ENCODE measurements at regions of chr7 and their contacts with region 1.

Region 1: DNA sequence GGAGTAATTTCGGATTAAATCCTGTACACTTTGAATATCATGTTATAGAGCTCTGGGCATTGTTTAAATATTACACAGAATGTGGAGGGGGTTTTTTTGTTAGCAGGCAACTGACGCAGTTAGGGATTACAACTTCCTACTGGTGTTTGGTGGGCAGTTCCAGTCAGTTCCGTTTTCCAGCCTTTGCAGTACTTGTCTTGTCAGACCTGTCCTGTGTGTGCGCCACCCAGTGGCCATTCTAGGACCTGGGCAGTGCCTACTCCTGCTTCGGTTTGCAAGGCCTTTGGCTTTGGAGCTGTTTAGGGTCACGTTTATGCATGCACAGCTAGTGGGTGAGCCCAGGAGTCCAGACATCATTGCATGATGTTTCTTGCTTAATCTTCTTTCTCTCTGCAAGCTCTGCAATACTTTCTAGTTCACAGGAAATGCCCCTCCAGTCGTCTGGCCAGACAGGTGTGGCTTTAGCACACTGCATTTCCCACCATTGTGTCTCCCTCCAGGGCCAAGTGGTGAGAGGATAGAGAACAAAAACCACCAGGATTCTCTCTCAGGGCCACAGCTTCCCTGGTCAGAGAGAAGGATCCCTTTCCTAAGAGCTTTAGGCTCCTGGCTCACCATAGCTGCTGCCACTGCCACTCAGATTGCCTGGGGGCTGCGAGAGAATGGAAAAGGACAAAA is 96.5 kb upstream of the TARP start:
- DNase-seq: peak; percentile 77
- H3K4me3 Mint-ChIP-seq: no peak overlapping the region
- H3K27ac Mint-ChIP-seq: peak overlapping the region; percentile 3
- H3K4me1 Mint-ChIP-seq: peaks cover 45% of the 10 kb centered on the region
- H3K27me3 Mint-ChIP-seq: no peaks in the 10 kb centered on the region

Region 2: GRCh38 chr7:37901236-37901827 is 468.6 kb before region 1 on chr7:
- CTCF ChIA-PET with region 1: interaction called, 13 read pairs
- DNase-seq: no peak
- H3K4me3 Mint-ChIP-seq: no peak overlapping the region
- H3K27ac Mint-ChIP-seq: no peak overlapping the region
- H3K4me1 Mint-ChIP-seq: no peaks in the 10 kb centered on the region
- H3K27me3 Mint-ChIP-seq: no peaks in the 10 kb centered on the region

Region 3: DNA sequence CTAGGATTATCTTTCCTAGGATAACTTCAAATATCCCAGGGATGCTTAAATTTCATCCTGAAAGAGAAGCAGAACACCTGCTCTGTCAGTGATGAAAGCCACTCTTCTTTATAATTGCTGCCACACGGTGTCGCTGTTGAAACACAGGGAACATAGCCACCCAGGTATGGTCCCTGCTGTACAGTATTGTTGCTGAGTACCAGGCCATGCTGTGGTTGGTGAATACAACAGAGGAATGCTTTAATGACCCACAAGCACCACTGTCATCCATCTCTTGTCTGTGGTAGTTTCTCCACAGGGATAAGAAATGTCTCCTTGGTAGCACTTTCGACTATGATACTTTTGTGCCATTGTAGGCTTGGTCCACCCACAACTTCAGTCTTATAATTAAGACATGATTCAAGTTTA is 262.5 kb before region 1 on chr7:
- CTCF ChIA-PET with region 1: interaction called, 48 read pairs
- DNase-seq: peak; percentile 76
- H3K4me3 Mint-ChIP-seq: no peak overlapping the region
- H3K27ac Mint-ChIP-seq: no peak overlapping the region
- H3K4me1 Mint-ChIP-seq: no peaks in the 10 kb centered on the region
- H3K27me3 Mint-ChIP-seq: peaks cover 12% of the 10 kb centered on the region

Region 4: DNA sequence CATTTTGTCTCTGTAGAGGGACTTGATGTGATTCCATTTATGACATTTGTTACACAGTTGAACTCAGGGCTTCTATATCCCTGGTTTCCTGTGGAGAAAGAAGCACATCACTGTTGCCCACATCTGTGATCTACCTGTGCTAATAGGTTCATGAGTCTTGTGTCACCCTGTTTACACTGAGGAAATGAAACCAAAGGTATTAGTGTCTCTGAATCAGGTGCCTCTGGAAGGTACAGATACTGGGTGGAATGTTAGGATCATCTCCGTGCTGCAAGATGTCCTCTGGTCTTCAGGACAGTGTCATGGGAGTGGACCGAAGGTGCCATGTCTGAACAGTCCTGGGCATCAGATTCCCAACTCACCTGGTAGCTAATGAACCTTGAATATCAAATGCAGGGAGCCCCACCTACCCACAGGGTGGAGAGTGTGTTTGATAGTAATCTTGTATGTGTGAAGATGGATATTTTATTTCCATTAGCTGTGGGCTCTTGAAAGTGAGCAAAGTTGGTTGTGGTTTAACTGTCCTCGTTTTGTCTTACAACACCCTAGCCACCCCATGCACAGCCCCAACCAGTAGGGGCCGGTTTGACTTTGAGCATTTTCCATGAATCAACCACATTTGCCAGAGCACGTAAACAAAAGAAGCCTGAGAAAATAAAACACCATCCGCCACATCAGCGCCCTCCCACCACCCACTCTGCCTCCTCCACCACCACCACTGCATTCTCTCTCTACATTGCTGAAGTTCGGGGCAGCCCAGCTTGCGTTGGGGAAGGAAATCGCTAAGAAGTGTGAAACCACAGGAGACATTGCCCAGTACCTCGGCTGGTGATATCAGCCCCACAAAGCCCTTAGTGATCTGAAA is 137.2 kb before region 1 on chr7:
- CTCF ChIA-PET with region 1: interaction called, 28 read pairs
- DNase-seq: peak; percentile 79
- H3K4me3 Mint-ChIP-seq: peak overlapping the region; percentile 48
- H3K27ac Mint-ChIP-seq: peak overlapping the region; percentile 96
- H3K4me1 Mint-ChIP-seq: peaks cover 76% of the 10 kb centered on the region
- H3K27me3 Mint-ChIP-seq: no peaks in the 10 kb centered on the region

Region 5: GRCh38 chr7:38257350-38257677 is 112.6 kb before region 1 on chr7:
- CTCF ChIA-PET with region 1: no interaction called
- DNase-seq: no peak
- H3K4me3 Mint-ChIP-seq: no peak overlapping the region
- H3K27ac Mint-ChIP-seq: no peak overlapping the region
- H3K4me1 Mint-ChIP-seq: no peaks in the 10 kb centered on the region
- H3K27me3 Mint-ChIP-seq: no peaks in the 10 kb centered on the region

Region 6: DNA sequence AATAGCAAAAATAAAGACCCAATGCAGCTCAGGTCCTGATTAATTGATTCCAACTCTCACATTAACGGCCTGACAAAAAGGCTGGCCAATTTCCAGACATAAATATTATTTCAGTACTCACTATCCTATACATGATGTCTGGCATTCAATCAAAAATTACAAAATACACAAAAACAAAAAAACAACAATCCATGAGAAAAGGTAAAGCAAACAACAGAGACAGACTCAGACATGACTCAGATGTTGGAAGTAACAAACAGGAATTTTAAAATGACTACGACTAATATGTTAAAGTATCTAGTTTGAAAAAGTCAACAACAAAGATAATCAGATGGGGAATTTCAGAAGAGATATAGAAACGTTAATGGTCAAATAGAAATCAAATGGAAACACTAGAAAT is 108.4 kb after region 1 on chr7:
- CTCF ChIA-PET with region 1: no interaction called
- DNase-seq: no peak
- H3K4me3 Mint-ChIP-seq: no peak overlapping the region
- H3K27ac Mint-ChIP-seq: no peak overlapping the region
- H3K4me1 Mint-ChIP-seq: no peaks in the 10 kb centered on the region
- H3K27me3 Mint-ChIP-seq: no peaks in the 10 kb centered on the region

Measured in activated naive CD4-positive, alpha-beta T cell treated with anti-CD3 and anti-CD28 coated beads, Interleukin-2, amount 10 ng/mL, durations not matched to agents 7 days and 5 days (primary cell).